ENCODE measurements at regions of chr14 and their contacts with region 1.

Region 1: DNA sequence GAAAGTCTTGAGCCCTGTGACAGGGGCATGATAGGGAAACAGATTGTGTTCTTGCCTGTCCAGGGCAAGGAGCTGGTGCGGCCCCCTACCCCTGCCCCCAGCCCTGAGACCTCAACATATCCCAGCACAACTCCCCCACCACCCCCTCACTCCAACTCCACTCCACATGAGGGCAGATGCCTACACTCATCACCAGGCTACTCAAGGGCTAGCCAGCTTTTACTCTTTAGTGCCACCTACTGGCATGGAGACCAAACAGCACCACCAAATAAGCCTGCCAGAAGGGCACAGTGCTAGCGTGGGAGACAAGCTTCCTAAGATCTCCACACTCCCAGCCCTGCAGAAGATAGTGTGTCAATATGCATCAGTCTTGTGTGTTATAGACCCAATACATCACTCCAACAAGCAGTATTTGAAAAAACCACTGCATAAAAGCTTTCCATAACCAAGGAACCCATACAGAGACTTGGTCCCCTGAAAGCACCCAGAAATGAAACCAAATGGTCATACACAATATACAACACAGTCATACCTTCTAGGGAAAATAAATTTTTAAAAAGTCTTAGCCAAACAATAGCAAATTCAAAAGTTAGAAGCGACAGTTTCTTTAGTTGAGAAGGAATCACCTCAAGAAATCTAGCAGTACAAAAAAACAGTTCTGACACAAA is 154.4 kb downstream of the KCNK10 start:
- DNase-seq: peak; percentile 69
- H3K4me3 Mint-ChIP-seq: no peak overlapping the region
- H3K27ac Mint-ChIP-seq: no peak overlapping the region
- H3K4me1 Mint-ChIP-seq: no peaks in the 10 kb centered on the region
- H3K27me3 Mint-ChIP-seq: peaks cover 10% of the 10 kb centered on the region

Region 2: GRCh38 chr14:87805315-87805723 is 363.3 kb before region 1 on chr14:
- CTCF ChIA-PET with region 1: interaction called, 7 read pairs
- intact Hi-C with region 1: loop called (anchors 1 kb)
- DNase-seq: peak; percentile 78
- H3K4me3 Mint-ChIP-seq: no peak overlapping the region
- H3K27ac Mint-ChIP-seq: no peak overlapping the region
- H3K4me1 Mint-ChIP-seq: peaks cover 2% of the 10 kb centered on the region
- H3K27me3 Mint-ChIP-seq: peaks cover 4% of the 10 kb centered on the region

Region 3: DNA sequence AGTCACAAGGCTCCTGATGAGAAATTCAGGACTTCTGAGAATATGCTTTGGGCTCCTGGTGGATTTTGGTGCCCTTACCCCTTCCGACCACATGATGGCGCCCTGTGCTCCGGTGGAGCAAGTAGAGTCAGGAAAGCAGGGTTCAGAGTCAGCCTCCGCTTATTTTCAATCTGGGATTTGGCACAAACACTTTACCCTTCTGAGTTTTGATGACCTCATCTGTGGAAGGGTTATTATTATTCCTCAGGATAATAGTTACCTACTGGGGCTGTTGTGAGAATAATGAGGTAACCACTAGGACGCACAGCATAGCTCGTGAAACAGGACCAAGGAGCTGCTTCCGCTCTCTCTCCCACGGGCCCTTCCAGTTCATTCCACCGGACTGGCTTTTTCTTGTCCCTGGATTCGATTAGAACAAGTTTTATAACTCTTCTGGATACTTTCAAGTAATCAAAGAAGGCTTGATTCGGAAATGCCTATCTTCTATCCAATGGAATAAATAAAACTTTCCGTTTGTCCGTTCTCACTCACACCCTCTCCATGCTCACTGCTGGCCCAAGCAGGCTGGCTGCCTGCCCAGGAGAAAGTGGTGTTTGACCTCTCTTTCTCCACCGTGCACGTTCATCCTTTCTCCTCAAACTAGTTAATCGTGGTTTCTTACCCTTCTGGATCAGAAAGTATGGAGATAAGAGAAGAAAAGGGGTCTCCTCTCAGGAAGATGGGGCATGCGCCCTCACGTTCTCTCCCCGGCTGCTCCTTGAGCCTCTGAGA is 280.2 kb before region 1 on chr14:
- CTCF ChIA-PET with region 1: interaction called, 3 read pairs
- intact Hi-C with region 1: loop called (anchors 1 kb)
- DNase-seq: peak; percentile 66
- H3K4me3 Mint-ChIP-seq: no peak overlapping the region
- H3K27ac Mint-ChIP-seq: no peak overlapping the region
- H3K4me1 Mint-ChIP-seq: no peaks in the 10 kb centered on the region
- H3K27me3 Mint-ChIP-seq: no peaks in the 10 kb centered on the region

Region 4: DNA sequence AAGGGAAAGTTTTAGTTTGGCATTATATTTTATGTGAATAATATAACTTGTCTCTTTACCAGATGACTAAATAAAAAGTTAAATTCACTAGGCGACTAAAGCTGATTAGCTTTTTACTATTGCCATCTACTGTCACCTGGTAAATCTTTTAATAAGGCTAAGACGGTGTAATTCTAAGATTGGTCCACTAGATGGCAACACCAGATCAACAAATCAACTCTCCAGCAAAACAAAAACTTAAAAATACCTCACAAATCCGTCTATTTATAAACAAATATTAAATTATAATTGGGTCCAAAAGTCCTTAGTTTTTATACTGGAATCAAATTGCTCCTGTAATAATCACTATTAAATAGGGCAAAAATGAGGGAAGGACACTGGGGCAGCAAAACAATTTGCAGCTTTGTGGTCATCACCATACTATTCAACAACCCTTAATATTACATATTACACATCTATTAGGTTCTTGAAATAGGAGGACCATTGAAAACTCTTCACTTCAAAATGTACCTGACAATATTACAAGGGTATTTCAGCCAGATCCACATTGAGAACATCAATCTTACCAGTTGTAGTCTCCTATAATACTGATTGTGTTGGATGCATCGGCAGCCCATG is 223.5 kb before region 1 on chr14:
- CTCF ChIA-PET with region 1: interaction called, 41 read pairs
- intact Hi-C with region 1: loop called (anchors 1 kb)
- DNase-seq: no peak
- H3K4me3 Mint-ChIP-seq: no peak overlapping the region
- H3K27ac Mint-ChIP-seq: no peak overlapping the region
- H3K4me1 Mint-ChIP-seq: no peaks in the 10 kb centered on the region
- H3K27me3 Mint-ChIP-seq: no peaks in the 10 kb centered on the region

Region 5: DNA sequence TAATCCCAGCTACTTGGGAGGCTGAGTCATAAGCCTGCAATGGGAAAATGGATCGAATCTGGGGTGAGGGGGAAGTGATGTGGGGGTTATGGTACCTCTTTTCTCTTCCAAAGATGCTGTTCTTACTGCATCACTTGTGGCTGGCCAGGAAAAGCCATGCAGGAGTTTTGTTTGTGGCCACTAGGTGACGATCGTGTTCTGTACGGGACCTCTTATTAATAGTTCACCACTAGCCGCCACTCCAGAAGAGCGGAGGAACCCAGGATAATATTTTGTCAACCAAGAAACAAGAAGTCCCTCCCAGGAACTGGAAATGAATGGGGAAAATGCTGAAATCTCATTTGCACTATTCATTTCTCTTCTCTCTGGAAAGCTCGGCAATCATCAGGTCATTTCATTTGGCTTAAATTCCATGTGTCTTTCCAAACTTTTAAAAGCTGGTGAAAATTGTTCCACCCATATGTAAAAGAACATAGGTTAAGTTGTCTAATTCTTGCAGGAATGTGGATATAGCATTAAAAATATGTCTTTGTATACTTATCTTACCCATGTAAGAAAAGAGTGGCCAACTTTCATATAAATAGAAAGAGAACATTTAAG is 154.8 kb before region 1 on chr14:
- CTCF ChIA-PET with region 1: interaction called, 6 read pairs
- intact Hi-C with region 1: loop called (anchors 1 kb)
- DNase-seq: peak; percentile 45
- H3K4me3 Mint-ChIP-seq: no peak overlapping the region
- H3K27ac Mint-ChIP-seq: no peak overlapping the region
- H3K4me1 Mint-ChIP-seq: peaks cover 61% of the 10 kb centered on the region
- H3K27me3 Mint-ChIP-seq: no peaks in the 10 kb centered on the region

Measured in activated naive CD4-positive, alpha-beta T cell treated with anti-CD3 and anti-CD28 coated beads for 36 hours (primary cell).